ENCODE measurements at regions of chr9 and their contacts with region 1.

Region 1: DNA sequence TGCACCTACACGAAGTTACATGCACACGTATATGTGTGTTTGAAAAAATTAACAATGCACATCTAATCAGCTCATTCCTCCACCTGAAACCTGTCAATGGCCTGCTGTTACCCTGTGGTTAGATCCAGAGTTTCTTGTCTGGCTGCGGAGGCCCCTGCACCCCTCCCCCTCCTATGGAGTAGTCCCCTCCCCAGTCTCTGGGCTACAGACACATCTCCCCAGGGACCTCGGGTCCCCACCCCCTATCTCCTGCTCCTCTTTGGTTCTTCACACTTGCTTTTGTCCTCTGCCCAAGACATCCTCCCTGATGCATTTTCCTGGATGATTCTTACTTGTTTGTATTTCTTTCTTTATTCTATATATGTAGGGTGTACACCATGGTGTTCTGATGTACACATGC is 27.2 kb downstream of the FAM240B start:
- DNase-seq: no peak
- H3K4me3 ChIP-seq: no peak overlapping the region
- H3K27ac ChIP-seq: no peak overlapping the region
- H3K4me1 ChIP-seq: peaks cover 5% of the 10 kb centered on the region
- H3K27me3 ChIP-seq: no peaks in the 10 kb centered on the region
- CTCF ChIP-seq: no peak
- EP300 ChIP-seq: no peak
- POLR2A ChIP-seq: no peak

Region 2: GRCh38 chr9:38641985-38642864 is 50.5 kb before region 1 on chr9:
- intact Hi-C with region 1: no loop called
- DNase-seq: no peak
- H3K4me3 ChIP-seq: no peak overlapping the region
- H3K27ac ChIP-seq: no peak overlapping the region
- H3K4me1 ChIP-seq: no peaks in the 10 kb centered on the region
- H3K27me3 ChIP-seq: no peaks in the 10 kb centered on the region
- CTCF ChIP-seq: peak in 1 of 3 donors; percentile 10
- EP300 ChIP-seq: no peak
- POLR2A ChIP-seq: no peak

Region 3: DNA sequence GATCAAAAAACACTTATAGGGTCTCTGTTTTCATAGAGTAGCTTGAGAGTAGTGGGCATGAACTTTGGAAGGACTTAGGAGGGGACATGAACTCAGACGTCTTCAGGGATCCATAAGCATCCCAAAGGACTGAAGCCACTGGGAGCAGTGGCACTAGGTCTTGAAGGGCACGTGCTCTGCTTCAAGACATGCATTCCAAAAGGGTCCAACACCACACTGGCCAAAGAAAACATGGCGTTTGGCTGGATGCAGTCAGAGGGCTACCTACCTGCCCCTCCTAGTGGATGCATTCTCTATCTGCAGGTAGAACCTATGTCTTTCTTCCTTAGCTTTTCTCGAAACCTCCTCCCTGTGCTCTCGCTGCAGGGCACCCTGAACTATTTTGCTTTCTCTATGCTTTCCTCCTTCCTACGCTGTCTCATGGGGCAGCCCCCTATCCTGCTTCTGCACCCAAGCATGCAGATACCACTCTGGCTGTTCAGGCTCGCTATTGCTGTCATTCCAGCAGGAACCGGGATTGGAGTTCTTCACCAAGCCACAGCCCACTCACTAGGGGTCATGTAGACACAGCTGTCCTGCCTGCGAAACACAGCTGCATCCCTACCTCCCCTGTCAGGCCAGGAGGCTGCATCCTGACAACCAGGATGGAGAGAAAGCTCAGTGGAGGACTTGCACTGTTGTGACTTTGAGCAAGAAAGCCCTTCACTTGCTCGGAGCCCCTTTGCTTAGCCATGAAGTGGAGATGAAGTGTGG is 15.4 kb after region 1 on chr9:
- intact Hi-C with region 1: loop called in 1 of 4 experiments (anchors 1 kb)
- DNase-seq: no peak
- H3K4me3 ChIP-seq: no peak overlapping the region
- H3K27ac ChIP-seq: no peak overlapping the region
- H3K4me1 ChIP-seq: no peaks in the 10 kb centered on the region
- H3K27me3 ChIP-seq: no peaks in the 10 kb centered on the region
- CTCF ChIP-seq: no peak
- EP300 ChIP-seq: no peak
- POLR2A ChIP-seq: no peak